ENCODE measurements at regions of chr14 and their contacts with region 1.

Region 1: DNA sequence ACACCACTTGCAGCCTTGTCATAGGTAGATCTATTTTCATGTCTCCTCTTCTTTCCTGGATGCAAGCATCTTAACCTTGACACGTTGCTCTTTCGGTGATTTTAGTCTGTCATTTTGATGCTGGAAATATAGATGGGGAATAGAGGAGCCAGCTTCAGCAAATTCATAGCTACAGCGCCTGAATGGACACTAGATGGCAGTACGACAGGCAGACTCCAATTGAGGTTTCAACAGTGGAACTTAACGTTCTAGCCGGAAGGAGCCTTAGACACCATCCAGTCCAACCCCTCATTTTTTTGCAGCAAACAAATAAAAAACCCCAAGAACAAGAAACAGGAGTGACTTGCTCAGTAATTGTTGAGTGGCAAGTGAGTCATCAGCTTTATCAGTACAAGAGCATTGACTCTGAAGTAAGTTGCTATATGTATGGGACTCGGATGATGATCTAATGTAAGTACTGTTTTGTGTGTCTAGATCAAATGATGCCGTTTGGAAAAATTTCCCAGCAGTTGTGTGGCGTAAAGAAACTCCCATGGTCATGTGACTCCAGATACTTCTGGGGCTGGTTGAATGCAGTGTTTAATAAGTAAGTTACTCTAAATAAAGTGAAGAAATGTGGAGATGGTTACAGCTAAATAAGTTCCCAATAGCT is 9.0 kb downstream of the DMAC2L start:
- DNase-seq: peak in 4 of 6 donors; percentile 30 to 72 (median 64)
- ATAC-seq: peak; percentile 91 to 99 (median 96)
- H3K4me3 ChIP-seq: peak overlapping the region in 1 of 4 donors; percentile 17
- H3K27ac ChIP-seq: peak overlapping the region in 2 of 4 donors; percentile 62 to 75
- H3K4me1 ChIP-seq: peaks cover 0 to 7% (median 6%) of the 10 kb centered on the region in 3 donors
- H3K27me3 ChIP-seq: no peaks in the 10 kb centered on the region
- CTCF ChIP-seq: peak; percentile 57 to 75 (median 64)

Region 2: GRCh38 chr14:50520947-50521815 is 200.0 kb after region 1 on chr14:
- intact Hi-C with region 1: loop called in 1 of 3 experiments (anchors 10 kb)
- DNase-seq: peak in 4 of 6 donors; percentile 30 to 55 (median 42)
- ATAC-seq: peak; percentile 89 to 96 (median 92)
- H3K4me3 ChIP-seq: no peak overlapping the region
- H3K27ac ChIP-seq: peak overlapping the region in 3 of 4 donors; percentile 29 to 71 (median 56)
- H3K4me1 ChIP-seq: peaks cover 7 to 25% (median 19%) of the 10 kb centered on the region in 3 donors
- H3K27me3 ChIP-seq: no peaks in the 10 kb centered on the region
- CTCF ChIP-seq: no peak

Region 3: GRCh38 chr14:50532502-50533240 is 211.5 kb after region 1 on chr14 and contains the start of gene MAP4K5:
- intact Hi-C with region 1: loop called in 2 of 3 experiments (anchors 5 to 10 kb)
- DNase-seq: peak; percentile 90 to 96 (median 94)
- ATAC-seq: peak; percentile 96 to 99 (median 98)
- H3K4me3 ChIP-seq: peak within 1 kb of the TSS; percentile 72 to 94 (median 90)
- H3K27ac ChIP-seq: peak within 1 kb of the TSS; percentile 92 to 96 (median 94)
- H3K4me1 ChIP-seq: peaks cover 0 to 29% (median 8%) of the 10 kb centered on the region in 3 donors
- H3K27me3 ChIP-seq: no peaks in the 10 kb centered on the region
- CTCF ChIP-seq: peak; percentile 57 to 91 (median 78)
- total RNA-seq, gene MAP4K5: 19.0 to 28.6 (median 23.5) TPM

Measured in pancreas (tissue), 10 donors.